ENCODE measurements at regions of chr3 and their contacts with region 1.

Region 1: DNA sequence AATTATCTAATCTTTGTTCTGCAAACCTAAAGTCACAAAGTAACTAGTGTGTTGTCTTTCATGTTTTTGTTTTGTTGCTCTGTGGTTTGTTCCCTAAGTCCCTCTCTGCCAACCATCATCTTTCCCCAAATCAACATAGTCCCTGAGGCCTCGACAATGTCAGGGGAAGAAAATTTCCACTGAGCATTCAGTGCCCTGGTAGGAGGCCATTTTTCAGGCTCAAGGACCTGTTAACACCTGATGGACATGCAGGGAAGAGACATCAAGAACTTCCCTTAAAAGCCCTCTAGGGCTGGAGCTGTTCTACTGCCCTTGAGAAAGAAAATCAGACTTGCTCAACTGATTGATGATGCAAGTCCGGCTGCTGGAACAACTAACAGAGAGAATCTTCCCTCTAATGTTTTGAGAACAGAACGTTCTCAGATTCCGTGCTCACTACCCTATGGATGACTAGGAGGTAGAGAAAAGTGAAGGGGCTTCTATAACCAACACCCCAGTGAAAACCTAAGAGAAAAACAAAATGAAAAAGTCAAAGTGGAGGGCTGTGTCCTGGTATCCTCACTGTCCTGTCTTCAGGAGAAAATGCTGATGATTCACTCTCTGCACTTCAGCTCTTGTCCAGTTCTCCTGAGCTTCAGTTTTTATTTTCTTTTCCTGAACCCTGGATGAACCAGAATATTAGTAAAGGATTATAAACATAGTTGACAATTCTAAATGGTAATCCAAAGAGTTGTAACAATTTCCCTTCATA is 373.1 kb downstream of the FOXP1 start:
- DNase-seq: no peak
- ATAC-seq: no peak
- H3K4me3 ChIP-seq: no peak overlapping the region
- H3K4me3 Mint-ChIP-seq: peak overlapping the region; percentile 9
- H3K27ac ChIP-seq: peak overlapping the region in 1 of 2 donors; percentile 21
- H3K27ac Mint-ChIP-seq: peak overlapping the region; percentile 74
- H3K4me1 ChIP-seq: peaks cover 5% of the 10 kb centered on the region
- H3K4me1 Mint-ChIP-seq: peaks cover 90% of the 10 kb centered on the region
- H3K27me3 ChIP-seq: no peaks in the 10 kb centered on the region
- H3K27me3 Mint-ChIP-seq: no peaks in the 10 kb centered on the region
- CTCF ChIP-seq: no peak

Region 2: GRCh38 chr3:71197841-71198565 is 12.4 kb before region 1 on chr3:
- CTCF ChIA-PET with region 1: no interaction called
- POLR2A ChIA-PET with region 1: no interaction called
- intact Hi-C with region 1: loop called in 1 of 2 experiments (anchors 2 kb)
- DNase-seq: no peak
- ATAC-seq: no peak
- H3K4me3 ChIP-seq: no peak overlapping the region
- H3K4me3 Mint-ChIP-seq: no peak overlapping the region
- H3K27ac ChIP-seq: no peak overlapping the region
- H3K27ac Mint-ChIP-seq: peak overlapping the region; percentile 45
- H3K4me1 ChIP-seq: no peaks in the 10 kb centered on the region
- H3K4me1 Mint-ChIP-seq: peaks cover 54% of the 10 kb centered on the region
- H3K27me3 ChIP-seq: no peaks in the 10 kb centered on the region
- H3K27me3 Mint-ChIP-seq: no peaks in the 10 kb centered on the region
- CTCF ChIP-seq: no peak

Region 3: GRCh38 chr3:71247221-71247976 is 37.0 kb after region 1 on chr3:
- CTCF ChIA-PET with region 1: no interaction called
- POLR2A ChIA-PET with region 1: no interaction called
- intact Hi-C with region 1: loop called in 1 of 2 experiments (anchors 2 kb)
- DNase-seq: peak in 2 of 14 experiments; percentile 27 to 30
- ATAC-seq: no peak
- H3K4me3 ChIP-seq: no peak overlapping the region
- H3K4me3 Mint-ChIP-seq: peak overlapping the region; percentile 15
- H3K27ac ChIP-seq: no peak overlapping the region
- H3K27ac Mint-ChIP-seq: peak overlapping the region; percentile 72
- H3K4me1 ChIP-seq: peaks cover 27% of the 10 kb centered on the region
- H3K4me1 Mint-ChIP-seq: peaks cover 91% of the 10 kb centered on the region
- H3K27me3 ChIP-seq: no peaks in the 10 kb centered on the region
- H3K27me3 Mint-ChIP-seq: no peaks in the 10 kb centered on the region
- CTCF ChIP-seq: no peak

Region 4: DNA sequence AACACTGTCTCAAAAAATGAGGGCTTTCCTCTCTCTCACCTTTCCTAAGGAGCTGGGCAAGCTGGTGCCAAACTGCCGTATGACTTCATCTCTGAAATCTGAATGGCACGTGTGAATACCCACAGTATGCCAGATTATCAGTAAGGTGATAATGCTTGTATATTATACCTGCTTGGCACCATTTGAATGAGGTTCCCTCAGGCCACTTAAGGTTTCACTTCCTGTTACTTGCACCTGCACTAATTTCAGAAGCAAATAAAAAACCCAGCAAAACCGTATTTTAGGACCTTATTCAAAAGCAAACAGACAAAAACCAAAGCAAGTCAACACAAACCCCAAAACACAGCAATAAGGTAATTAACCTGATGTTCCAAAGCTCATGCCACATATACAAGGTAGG is 353.4 kb after region 1 on chr3:
- CTCF ChIA-PET with region 1: no interaction called
- POLR2A ChIA-PET with region 1: no interaction called
- intact Hi-C with region 1: no loop called
- DNase-seq: no peak
- ATAC-seq: no peak
- H3K4me3 ChIP-seq: no peak overlapping the region
- H3K4me3 Mint-ChIP-seq: no peak overlapping the region
- H3K27ac ChIP-seq: no peak overlapping the region
- H3K27ac Mint-ChIP-seq: no peak overlapping the region
- H3K4me1 ChIP-seq: no peaks in the 10 kb centered on the region
- H3K4me1 Mint-ChIP-seq: peaks cover 15% of the 10 kb centered on the region
- H3K27me3 ChIP-seq: no peaks in the 10 kb centered on the region
- H3K27me3 Mint-ChIP-seq: no peaks in the 10 kb centered on the region
- CTCF ChIP-seq: no peak

Measured in CD4-positive, alpha-beta T cell (primary cell).